Gastrocnemius medialis (tissue), 4 donors: ENCODE measurements at regions of chr4 and their contacts with region 1.

Region 1: GRCh38 chr4:124111922-124112321 is 600.6 kb downstream of the ANKRD50 start:
- DNase-seq: peak in 1 of 2 donors; percentile 16
- ATAC-seq: peak; percentile 91 to 97
- H3K4me3 ChIP-seq: no peak overlapping the region
- H3K27ac ChIP-seq: peak overlapping the region in 2 of 4 donors; percentile 17 to 39
- H3K4me1 ChIP-seq: peaks cover 4 to 11% of the 10 kb centered on the region in 2 donors
- H3K27me3 ChIP-seq: no peaks in the 10 kb centered on the region
- CTCF ChIP-seq: peak; percentile 57 to 73 (median 66)
- POLR2A ChIP-seq: no peak

Region 2: GRCh38 chr4:123127218-123127617 is 984.7 kb before region 1 on chr4:
- in situ Hi-C with region 1: loop called (anchors 25 kb)
- intact Hi-C with region 1: loop called (anchors 2 kb)
- DNase-seq: no peak
- ATAC-seq: peak in 1 of 2 donors; percentile 39
- H3K4me3 ChIP-seq: no peak overlapping the region
- H3K27ac ChIP-seq: no peak overlapping the region
- H3K4me1 ChIP-seq: no peaks in the 10 kb centered on the region
- H3K27me3 ChIP-seq: no peaks in the 10 kb centered on the region
- CTCF ChIP-seq: peak in 3 of 5 experiments; percentile 7 to 35 (median 28)
- POLR2A ChIP-seq: no peak

Region 3: GRCh38 chr4:123418351-123418931 is 693.5 kb before region 1 on chr4:
- in situ Hi-C with region 1: loop called in 1 of 4 experiments (anchors 25 kb)
- intact Hi-C with region 1: no loop called
- DNase-seq: peak; percentile 22 to 48
- ATAC-seq: peak; percentile 92 to 96
- H3K4me3 ChIP-seq: peak overlapping the region in 1 of 4 donors; percentile 20
- H3K27ac ChIP-seq: peak overlapping the region; percentile 56 to 79 (median 78)
- H3K4me1 ChIP-seq: peaks cover 23 to 25% of the 10 kb centered on the region in 2 donors
- H3K27me3 ChIP-seq: no peaks in the 10 kb centered on the region
- CTCF ChIP-seq: no peak
- POLR2A ChIP-seq: no peak

Region 4: GRCh38 chr4:123564758-123565346 is 547.1 kb before region 1 on chr4:
- in situ Hi-C with region 1: loop called (anchors 25 kb)
- intact Hi-C with region 1: no loop called
- DNase-seq: peak; percentile 15 to 23
- ATAC-seq: peak; percentile 93 to 95
- H3K4me3 ChIP-seq: no peak overlapping the region
- H3K27ac ChIP-seq: no peak overlapping the region
- H3K4me1 ChIP-seq: no peaks in the 10 kb centered on the region
- H3K27me3 ChIP-seq: no peaks in the 10 kb centered on the region
- CTCF ChIP-seq: peak; percentile 63 to 84 (median 70)
- POLR2A ChIP-seq: no peak